T-cell (primary cell): ENCODE measurements at regions of chr20 and their contacts with region 1.

Region 1: DNA sequence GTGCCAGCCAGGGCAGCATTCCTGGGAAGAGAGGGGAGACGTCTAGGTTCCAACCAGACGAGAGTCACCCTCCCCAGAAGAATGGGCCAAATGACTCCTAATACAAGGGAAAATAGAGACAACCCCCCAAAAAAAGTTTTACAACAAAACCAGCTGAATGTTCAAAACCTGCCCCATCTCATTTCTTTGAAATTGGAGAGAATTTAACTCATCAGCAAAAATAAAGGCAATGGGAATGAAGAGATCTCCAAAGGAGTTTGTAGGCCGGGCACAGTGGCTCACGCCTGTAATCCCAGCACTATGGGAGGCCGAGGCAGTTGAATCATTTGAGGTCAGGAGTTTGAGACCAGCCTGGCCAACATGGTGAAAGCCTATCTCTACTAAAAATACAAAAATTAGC is 9.7 kb upstream of the EMILIN3 start:
- DNase-seq: no peak
- ATAC-seq: no peak
- H3K4me3 ChIP-seq: no peak overlapping the region
- H3K4me3 Mint-ChIP-seq: no peak overlapping the region
- H3K27ac ChIP-seq: no peak overlapping the region
- H3K27ac Mint-ChIP-seq: no peak overlapping the region
- H3K4me1 ChIP-seq: no peaks in the 10 kb centered on the region
- H3K4me1 Mint-ChIP-seq: peaks cover 0 to 13% (median 3%) of the 10 kb centered on the region in 3 donors
- H3K27me3 ChIP-seq: peaks cover 4 to 55% of the 10 kb centered on the region in 2 experiments
- H3K27me3 Mint-ChIP-seq: peaks cover 37 to 69% of the 10 kb centered on the region in 2 donors

Region 2: DNA sequence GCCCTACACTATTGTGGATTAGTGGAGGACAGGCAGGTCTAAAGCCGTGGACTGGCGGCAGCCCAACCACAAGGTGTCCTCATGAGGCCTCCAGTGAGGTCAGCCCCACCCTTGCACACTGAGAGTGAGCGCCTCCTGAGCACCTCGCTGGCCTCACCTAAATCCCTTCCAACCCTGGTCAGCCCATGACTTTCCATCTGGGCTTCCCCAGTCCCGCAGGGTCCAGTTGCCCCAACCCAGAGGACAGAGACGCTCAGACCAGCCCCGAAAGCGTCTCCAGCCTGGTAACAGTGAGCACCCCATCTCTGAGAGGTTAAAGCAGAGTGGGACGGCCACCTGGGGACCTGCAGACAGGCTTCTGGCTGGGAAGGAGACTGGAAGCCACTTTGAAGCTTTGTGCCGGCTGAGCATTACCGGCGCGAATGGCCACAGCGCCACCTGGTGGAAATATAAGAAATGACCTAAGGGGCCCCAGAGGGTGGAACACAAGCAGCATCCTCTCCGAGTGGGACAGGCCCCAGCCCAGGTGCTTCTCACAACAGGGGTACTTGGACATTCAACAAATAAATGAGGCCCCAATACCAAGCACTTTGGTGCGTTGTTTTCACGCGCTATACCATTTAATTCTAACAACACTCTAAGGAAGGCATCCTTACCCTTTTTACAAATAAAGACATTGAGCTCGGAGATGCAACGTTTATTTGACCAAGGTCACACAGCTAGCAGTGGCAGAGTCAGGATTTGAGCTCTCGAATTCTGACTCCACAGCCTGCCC is 413.4 kb before region 1 on chr20:
- CTCF ChIA-PET with region 1: no interaction called
- POLR2A ChIA-PET with region 1: interaction called in 1 of 2 experiments, 10 read pairs
- DNase-seq: peak; percentile 40 to 83 (median 61)
- ATAC-seq: peak; percentile 83 to 91 (median 85)
- H3K4me3 ChIP-seq: no peak overlapping the region
- H3K4me3 Mint-ChIP-seq: no peak overlapping the region
- H3K27ac ChIP-seq: no peak overlapping the region
- H3K27ac Mint-ChIP-seq: peak overlapping the region in 1 of 2 donors; percentile 59
- H3K4me1 ChIP-seq: peaks cover 0 to 18% of the 10 kb centered on the region in 2 experiments
- H3K4me1 Mint-ChIP-seq: peaks cover 0 to 12% (median 11%) of the 10 kb centered on the region in 3 donors
- H3K27me3 ChIP-seq: peaks cover 0 to 6% of the 10 kb centered on the region in 2 experiments
- H3K27me3 Mint-ChIP-seq: no peaks in the 10 kb centered on the region